CD14-positive monocyte (primary cell): ENCODE measurements at regions of chr18 and their contacts with region 1.

Region 1: GRCh38 chr18:12947355-12948041 is at the start of gene SEH1L:
- DNase-seq: peak; percentile 96 to 99 (median 98)
- H3K4me3 ChIP-seq: peak within 1 kb of the TSS; percentile 70 to 92 (median 80)
- H3K4me3 Mint-ChIP-seq: peak within 1 kb of the TSS; percentile 89 to 99
- H3K27ac ChIP-seq: peak within 1 kb of the TSS; percentile 90 to 93
- H3K27ac Mint-ChIP-seq: peak within 1 kb of the TSS; percentile 95 to 99 (median 99)
- H3K4me1 ChIP-seq: peaks cover 14 to 21% of the 10 kb centered on the region in 2 donors
- H3K4me1 Mint-ChIP-seq: peaks cover 22% of the 10 kb centered on the region
- H3K27me3 ChIP-seq: no peaks in the 10 kb centered on the region
- H3K27me3 Mint-ChIP-seq: peaks cover 0 to 5% (median 0%) of the 10 kb centered on the region in 3 donors
- CTCF ChIP-seq: no peak
- polyA plus RNA-seq, gene SEH1L: 7.1 to 26.9 (median 25.9) TPM

Region 2: GRCh38 chr18:12376718-12377555 is 570.6 kb before region 1 on chr18 and contains the start of gene AFG3L2:
- intact Hi-C with region 1: loop called (anchors 2 kb)
- DNase-seq: peak; percentile 98 to 99 (median 99)
- H3K4me3 ChIP-seq: peak within 1 kb of the TSS; percentile 66 to 77 (median 66)
- H3K4me3 Mint-ChIP-seq: peak within 1 kb of the TSS; percentile 86 to 96
- H3K27ac ChIP-seq: peak within 1 kb of the TSS; percentile 89 to 96
- H3K27ac Mint-ChIP-seq: peak within 1 kb of the TSS; percentile 92 to 98 (median 96)
- H3K4me1 ChIP-seq: peaks cover 25 to 27% of the 10 kb centered on the region in 2 donors
- H3K4me1 Mint-ChIP-seq: peaks cover 36% of the 10 kb centered on the region
- H3K27me3 ChIP-seq: no peaks in the 10 kb centered on the region
- H3K27me3 Mint-ChIP-seq: no peaks in the 10 kb centered on the region
- CTCF ChIP-seq: no peak
- polyA plus RNA-seq, gene AFG3L2: 13.9 to 15.5 (median 13.9) TPM

Region 3: DNA sequence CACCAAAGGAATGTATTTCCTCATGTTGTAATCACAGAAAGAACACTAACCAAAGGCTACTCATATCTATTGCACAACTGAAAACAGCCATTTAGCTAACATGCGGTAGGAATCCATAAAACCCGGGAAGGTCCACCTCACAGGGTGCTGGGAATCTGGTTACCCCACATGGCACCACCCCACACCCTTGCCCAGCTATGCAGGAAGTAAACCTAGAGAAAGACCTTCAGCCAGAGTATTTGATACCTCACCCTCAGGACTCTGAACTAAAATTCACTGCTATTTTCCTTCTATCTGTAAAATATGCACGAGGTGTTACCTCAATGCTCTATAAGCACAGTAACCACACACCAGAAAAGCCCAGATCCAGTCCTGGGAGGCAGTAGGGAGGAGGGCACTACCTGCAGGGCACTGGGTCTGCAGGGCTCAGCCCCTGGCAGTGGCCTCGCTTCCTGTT is 109.3 kb before region 1 on chr18:
- intact Hi-C with region 1: loop called in 1 of 2 experiments (anchors 10 kb)
- DNase-seq: peak; percentile 42 to 86 (median 84)
- H3K4me3 ChIP-seq: peak overlapping the region; percentile 19 to 74 (median 57)
- H3K4me3 Mint-ChIP-seq: peak overlapping the region; percentile 24 to 83
- H3K27ac ChIP-seq: peak overlapping the region; percentile 95 to 97
- H3K27ac Mint-ChIP-seq: peak overlapping the region; percentile 96 to 98 (median 97)
- H3K4me1 ChIP-seq: peaks cover 42 to 52% of the 10 kb centered on the region in 2 donors
- H3K4me1 Mint-ChIP-seq: peaks cover 52% of the 10 kb centered on the region
- H3K27me3 ChIP-seq: no peaks in the 10 kb centered on the region
- H3K27me3 Mint-ChIP-seq: no peaks in the 10 kb centered on the region
- CTCF ChIP-seq: no peak

Region 4: DNA sequence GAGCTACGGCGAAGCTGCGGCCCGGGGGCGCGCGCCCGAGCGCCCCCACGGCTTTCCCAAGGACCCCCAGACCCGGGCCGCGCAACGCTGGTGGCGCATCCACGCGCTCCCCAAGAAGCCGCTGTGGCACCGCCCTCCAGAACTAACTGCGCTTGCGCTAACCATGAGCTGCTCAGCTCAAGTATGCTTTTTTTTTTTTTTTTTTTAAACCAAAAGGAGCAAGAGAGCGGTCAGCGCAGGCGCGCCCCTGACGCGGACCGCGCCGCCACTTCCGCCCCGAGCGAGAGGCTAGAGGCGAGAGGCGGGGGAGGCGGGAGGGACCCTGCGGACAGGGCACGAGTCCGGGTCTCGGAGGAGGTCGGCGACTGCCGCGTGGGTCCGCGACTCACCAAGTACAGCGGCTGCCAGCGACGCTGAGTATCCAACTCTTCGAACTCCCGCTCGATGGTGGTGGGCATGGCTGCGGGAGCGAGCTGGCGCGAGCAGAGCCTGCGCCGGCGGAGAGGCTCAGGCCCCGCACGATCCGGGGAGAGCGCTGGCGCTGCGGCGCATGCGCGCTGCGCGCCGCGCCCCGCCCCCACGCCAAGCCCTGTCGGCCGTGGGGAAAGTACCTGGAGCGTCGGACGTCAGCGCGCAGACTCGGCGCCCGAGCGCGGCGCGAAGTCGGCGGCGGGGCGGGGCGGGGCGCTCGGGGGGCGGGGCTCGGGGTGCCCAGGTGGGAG is 63.7 kb before region 1 on chr18 and contains the start of gene PTPN2:
- intact Hi-C with region 1: loop called (anchors 5 kb)
- DNase-seq: peak; percentile 95 to 96 (median 96)
- H3K4me3 ChIP-seq: peak within 1 kb of the TSS; percentile 69 to 96 (median 83)
- H3K4me3 Mint-ChIP-seq: peak within 1 kb of the TSS; percentile 90 to 94
- H3K27ac ChIP-seq: peak within 1 kb of the TSS; percentile 97 to 98
- H3K27ac Mint-ChIP-seq: peak within 1 kb of the TSS; percentile 92 to 97 (median 96)
- H3K4me1 ChIP-seq: peaks cover 58 to 62% of the 10 kb centered on the region in 2 donors
- H3K4me1 Mint-ChIP-seq: peaks cover 63% of the 10 kb centered on the region
- H3K27me3 ChIP-seq: no peaks in the 10 kb centered on the region
- H3K27me3 Mint-ChIP-seq: no peaks in the 10 kb centered on the region
- CTCF ChIP-seq: no peak
- polyA plus RNA-seq, gene PTPN2: 55.6 to 108 (median 78.4) TPM

Region 5: GRCh38 chr18:12904012-12904516 is 43.4 kb before region 1 on chr18:
- intact Hi-C with region 1: no loop called
- DNase-seq: no peak
- H3K4me3 ChIP-seq: no peak overlapping the region
- H3K4me3 Mint-ChIP-seq: peak overlapping the region; percentile 32 to 55
- H3K27ac ChIP-seq: no peak overlapping the region
- H3K27ac Mint-ChIP-seq: peak overlapping the region in 2 of 7 donors; percentile 31 to 42
- H3K4me1 ChIP-seq: no peaks in the 10 kb centered on the region
- H3K4me1 Mint-ChIP-seq: peaks cover 8% of the 10 kb centered on the region
- H3K27me3 ChIP-seq: peaks cover 0 to 17% of the 10 kb centered on the region in 2 donors
- H3K27me3 Mint-ChIP-seq: peaks cover 11 to 15% (median 13%) of the 10 kb centered on the region in 3 donors
- CTCF ChIP-seq: no peak

Region 6: DNA sequence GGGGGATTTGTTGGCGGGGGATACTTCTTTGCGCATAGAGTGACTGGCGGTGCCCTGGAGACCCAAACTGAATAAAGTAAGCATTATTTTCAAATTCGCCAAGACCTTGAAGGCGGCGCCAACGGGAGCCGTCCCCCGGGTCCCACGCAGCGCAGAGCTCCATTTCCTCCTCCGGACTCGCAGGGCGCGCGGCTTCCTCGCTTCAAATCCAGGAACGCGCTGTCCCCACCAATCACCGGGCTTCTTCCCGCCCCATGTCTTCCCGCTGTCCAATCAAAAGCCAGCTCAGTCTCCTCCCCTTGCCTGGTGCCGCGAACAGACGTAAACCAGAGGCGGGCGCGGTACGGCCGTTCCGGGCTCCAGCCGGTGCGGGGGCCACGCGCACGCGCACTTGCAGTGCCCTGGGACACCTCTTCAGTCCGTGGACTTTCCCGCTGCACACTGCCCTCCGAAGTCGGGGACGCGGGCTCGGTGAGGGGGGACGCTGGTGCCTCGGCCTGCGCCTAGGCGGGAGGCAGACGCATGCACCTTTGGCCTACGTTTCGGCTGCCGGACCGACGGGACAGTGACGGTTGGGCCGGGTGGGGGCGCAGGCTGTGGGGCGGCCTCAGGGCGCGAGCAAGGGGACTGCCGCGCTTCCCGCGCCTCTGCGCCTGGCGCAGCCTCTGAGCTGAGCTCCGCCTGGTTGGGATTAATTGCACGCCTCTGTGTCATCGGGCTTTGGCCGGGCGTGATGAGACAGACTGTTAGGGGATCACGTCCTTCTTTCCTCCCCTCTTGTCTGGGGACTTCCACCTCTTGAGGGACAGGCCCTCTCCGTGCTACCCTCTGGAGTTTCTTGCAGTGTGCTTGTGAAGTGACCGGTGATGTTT is 43.7 kb after region 1 on chr18 and contains the start of gene CEP192:
- intact Hi-C with region 1: loop called (anchors 2 to 5 kb)
- DNase-seq: peak; percentile 95 to 97 (median 97)
- H3K4me3 ChIP-seq: peak within 1 kb of the TSS; percentile 62 to 98 (median 76)
- H3K4me3 Mint-ChIP-seq: peak within 1 kb of the TSS; percentile 98 to 99
- H3K27ac ChIP-seq: peak within 1 kb of the TSS; percentile 76 to 91
- H3K27ac Mint-ChIP-seq: peak within 1 kb of the TSS; percentile 93 to 97 (median 96)
- H3K4me1 ChIP-seq: peaks cover 21 to 29% of the 10 kb centered on the region in 2 donors
- H3K4me1 Mint-ChIP-seq: peaks cover 26% of the 10 kb centered on the region
- H3K27me3 ChIP-seq: no peaks in the 10 kb centered on the region
- H3K27me3 Mint-ChIP-seq: no peaks in the 10 kb centered on the region
- CTCF ChIP-seq: no peak
- polyA plus RNA-seq, gene CEP192: 3.0 to 29.6 (median 3.7) TPM

Region 7: DNA sequence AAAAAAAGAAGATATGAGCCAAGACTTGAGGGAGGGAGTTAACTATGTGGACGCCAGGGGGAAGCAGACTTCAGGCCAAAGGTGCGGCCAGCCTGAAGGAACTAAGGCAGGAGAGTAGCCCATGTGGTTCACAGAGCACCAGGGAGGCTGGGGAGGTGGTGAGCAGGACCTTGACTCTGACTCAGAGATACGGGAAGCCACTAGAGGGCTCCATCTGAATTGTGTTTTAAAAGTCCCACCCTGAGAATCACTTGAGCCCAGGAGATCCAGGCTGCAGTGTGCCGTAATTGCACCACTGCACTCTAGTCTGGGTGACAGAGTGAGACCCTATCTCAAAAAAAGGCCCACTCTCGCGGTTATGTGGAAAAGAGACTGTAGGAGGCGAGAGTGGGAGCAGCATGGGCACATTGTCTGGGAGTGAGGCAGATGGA is 56.0 kb after region 1 on chr18:
- intact Hi-C with region 1: no loop called
- DNase-seq: peak in 1 of 3 donors; percentile 11
- H3K4me3 ChIP-seq: no peak overlapping the region
- H3K4me3 Mint-ChIP-seq: no peak overlapping the region
- H3K27ac ChIP-seq: no peak overlapping the region
- H3K27ac Mint-ChIP-seq: peak overlapping the region in 2 of 7 donors; percentile 28 to 65
- H3K4me1 ChIP-seq: peaks cover 7 to 10% of the 10 kb centered on the region in 2 donors
- H3K4me1 Mint-ChIP-seq: peaks cover 16% of the 10 kb centered on the region
- H3K27me3 ChIP-seq: no peaks in the 10 kb centered on the region
- H3K27me3 Mint-ChIP-seq: no peaks in the 10 kb centered on the region
- CTCF ChIP-seq: peak; percentile 35